Calu3 (cell line): ENCODE measurements at regions of chr9 and their contacts with region 1.

Region 1: DNA sequence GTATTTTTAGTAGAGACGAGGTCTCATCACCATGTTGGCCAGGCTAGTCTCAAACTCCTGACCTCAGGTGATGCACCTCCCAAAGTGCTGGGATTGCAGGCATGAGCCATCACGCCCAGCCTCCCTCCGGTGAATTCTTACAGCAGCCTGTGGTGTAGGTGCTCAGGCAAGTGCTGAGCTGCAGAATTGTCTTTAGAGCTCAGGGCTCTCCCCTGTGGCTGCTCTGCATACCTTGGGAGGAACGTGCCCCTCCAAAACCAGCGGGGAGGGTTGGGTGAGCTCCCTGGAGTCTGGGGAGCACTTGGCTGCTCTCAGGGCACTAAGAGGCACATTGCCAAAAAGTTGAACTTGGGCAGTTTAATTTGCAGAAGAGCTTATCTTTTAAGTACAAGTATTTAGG is 29.4 kb downstream of the SECISBP2 start:
- DNase-seq: no peak
- H3K4me3 Mint-ChIP-seq: no peak overlapping the region
- H3K27ac Mint-ChIP-seq: no peak overlapping the region
- H3K4me1 Mint-ChIP-seq: no peaks in the 10 kb centered on the region
- H3K27me3 Mint-ChIP-seq: no peaks in the 10 kb centered on the region
- CTCF ChIP-seq: no peak

Region 2: DNA sequence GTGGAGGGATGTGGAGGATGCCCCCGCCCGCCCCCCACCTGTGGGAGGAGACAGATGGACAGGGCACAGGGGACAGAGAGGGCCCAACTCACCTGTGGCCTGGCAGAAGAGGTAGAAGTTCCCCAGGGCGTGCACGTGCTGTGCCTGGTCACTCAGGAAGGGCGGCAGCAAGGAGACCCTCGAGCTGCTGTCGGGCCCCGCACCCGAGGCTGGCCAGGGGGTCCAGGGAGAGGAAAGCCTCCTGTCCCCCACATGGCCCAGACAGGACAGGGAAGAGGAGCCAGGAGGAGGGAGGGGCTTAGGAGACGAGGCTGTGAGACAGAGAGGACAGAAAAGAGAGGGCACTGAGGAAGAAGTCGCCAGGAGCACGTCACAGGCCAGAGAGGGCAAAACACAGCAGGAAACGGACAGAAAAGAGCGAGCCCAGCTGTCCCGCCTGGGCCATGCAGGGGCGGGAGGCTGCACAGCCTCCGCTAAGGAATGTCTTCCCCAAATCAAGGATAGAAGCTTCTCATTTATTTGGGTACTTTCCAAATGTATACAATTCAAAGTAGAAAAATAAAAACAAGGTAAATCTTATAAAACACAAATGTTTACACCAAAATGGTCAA is 29.2 kb after region 1 on chr9:
- CTCF ChIA-PET with region 1: interaction called, 15 read pairs
- intact Hi-C with region 1: no loop called
- DNase-seq: no peak
- H3K4me3 Mint-ChIP-seq: no peak overlapping the region
- H3K27ac Mint-ChIP-seq: no peak overlapping the region
- H3K4me1 Mint-ChIP-seq: no peaks in the 10 kb centered on the region
- H3K27me3 Mint-ChIP-seq: no peaks in the 10 kb centered on the region
- CTCF ChIP-seq: no peak

Region 3: GRCh38 chr9:89519373-89519805 is 171.7 kb after region 1 on chr9:
- CTCF ChIA-PET with region 1: no interaction called
- intact Hi-C with region 1: no loop called
- DNase-seq: peak; percentile 60
- H3K4me3 Mint-ChIP-seq: no peak overlapping the region
- H3K27ac Mint-ChIP-seq: peak overlapping the region; percentile 45
- H3K4me1 Mint-ChIP-seq: peaks cover 18% of the 10 kb centered on the region
- H3K27me3 Mint-ChIP-seq: no peaks in the 10 kb centered on the region
- CTCF ChIP-seq: no peak